Thyroid gland (tissue), 4 donors: ENCODE measurements at regions of chr6 and their contacts with region 1.

Region 1: GRCh38 chr6:32741031-32741960 is at the start of gene HLA-DQA2:
- DNase-seq: no peak
- H3K4me3 ChIP-seq: no peak within 1 kb of the TSS
- H3K27ac ChIP-seq: no peak within 1 kb of the TSS
- H3K4me1 ChIP-seq: no peaks in the 10 kb centered on the region
- H3K27me3 ChIP-seq: no peaks in the 10 kb centered on the region
- CTCF ChIP-seq: no peak
- POLR2A ChIP-seq: no peak
- total RNA-seq, gene HLA-DQA2: 0.33 to 0.94 TPM in 2 of 4 donors, not detected in the others

Region 2: GRCh38 chr6:32642720-32643106 is 98.6 kb before region 1 on chr6:
- intact Hi-C with region 1: loop called (anchors 10 kb)
- DNase-seq: no peak
- H3K4me3 ChIP-seq: no peak overlapping the region
- H3K27ac ChIP-seq: no peak overlapping the region
- H3K4me1 ChIP-seq: no peaks in the 10 kb centered on the region
- H3K27me3 ChIP-seq: no peaks in the 10 kb centered on the region
- CTCF ChIP-seq: no peak
- POLR2A ChIP-seq: no peak

Region 3: DNA sequence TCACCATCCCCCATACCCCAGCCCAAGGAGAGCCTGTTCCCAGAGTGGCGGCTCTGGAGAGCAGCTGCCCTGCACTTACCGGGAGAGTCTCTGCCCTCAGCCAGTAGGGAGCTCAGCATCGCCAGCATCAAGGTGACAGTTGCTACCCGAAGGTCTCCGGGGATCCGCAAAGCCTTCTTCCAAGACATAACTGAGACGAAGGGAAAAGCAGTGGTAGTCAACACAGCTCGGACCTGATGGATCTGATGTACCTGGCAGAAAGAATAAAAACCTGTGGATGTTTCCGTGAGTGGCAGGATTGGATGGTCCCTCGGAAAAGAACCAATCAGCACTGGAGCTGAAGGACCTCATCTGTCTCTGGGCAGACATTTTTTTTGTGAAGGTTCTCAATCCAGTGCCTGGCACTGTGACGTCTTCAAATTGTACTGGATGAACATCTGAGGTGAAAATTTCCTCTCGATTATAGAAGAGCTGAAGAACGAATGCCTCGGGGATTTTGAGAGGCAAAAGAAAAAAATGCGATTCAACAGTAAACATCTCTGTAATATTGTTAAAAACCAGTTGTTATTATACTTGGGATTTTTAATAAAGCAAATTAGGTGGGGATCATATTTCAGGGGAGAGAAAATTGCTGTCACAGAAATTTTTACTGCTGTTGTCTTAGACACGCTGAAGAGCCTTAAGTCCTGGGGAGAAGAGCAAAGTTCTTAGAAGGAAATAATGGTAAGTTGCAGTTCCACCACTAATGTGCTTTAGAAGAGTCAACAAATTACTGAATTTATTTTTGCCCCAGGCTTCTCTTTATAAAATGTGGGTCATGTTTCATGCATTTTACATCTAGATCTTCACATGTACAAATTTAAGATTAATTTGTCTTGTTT is 74.6 kb before region 1 on chr6 and contains the start of gene HLA-DQB1:
- intact Hi-C with region 1: no loop called
- DNase-seq: peak; percentile 8 to 63
- H3K4me3 ChIP-seq: no peak within 1 kb of the TSS
- H3K27ac ChIP-seq: no peak within 1 kb of the TSS
- H3K4me1 ChIP-seq: no peaks in the 10 kb centered on the region
- H3K27me3 ChIP-seq: no peaks in the 10 kb centered on the region
- CTCF ChIP-seq: no peak
- POLR2A ChIP-seq: no peak
- total RNA-seq, gene HLA-DQB1: 0.27 to 8.6 (median 2.7) TPM in 3 of 4 donors, not detected in the other